Right cardiac atrium (tissue), 5 donors: ENCODE measurements at regions of chr6 and their contacts with region 1.

Region 1: GRCh38 chr6:30922447-30922852 is 8.4 kb downstream of the VARS2 start:
- DNase-seq: no peak
- ATAC-seq: no peak
- H3K4me3 ChIP-seq: no peak overlapping the region
- H3K27ac ChIP-seq: no peak overlapping the region
- H3K4me1 ChIP-seq: no peaks in the 10 kb centered on the region
- H3K27me3 ChIP-seq: no peaks in the 10 kb centered on the region

Region 2: GRCh38 chr6:30981942-30982772 is 59.7 kb after region 1 on chr6:
- intact Hi-C with region 1: no loop called
- DNase-seq: peak in 2 of 3 donors; percentile 27 to 52
- ATAC-seq: peak; percentile 83
- H3K4me3 ChIP-seq: no peak overlapping the region
- H3K27ac ChIP-seq: no peak overlapping the region
- H3K4me1 ChIP-seq: no peaks in the 10 kb centered on the region
- H3K27me3 ChIP-seq: no peaks in the 10 kb centered on the region

Region 3: GRCh38 chr6:31060145-31060544 is 137.7 kb after region 1 on chr6:
- intact Hi-C with region 1: loop called in 1 of 4 experiments (anchors 5 kb)
- DNase-seq: no peak
- ATAC-seq: no peak
- H3K4me3 ChIP-seq: no peak overlapping the region
- H3K27ac ChIP-seq: no peak overlapping the region
- H3K4me1 ChIP-seq: no peaks in the 10 kb centered on the region
- H3K27me3 ChIP-seq: no peaks in the 10 kb centered on the region

Region 4: GRCh38 chr6:31143148-31143547 is 220.7 kb after region 1 on chr6:
- intact Hi-C with region 1: no loop called
- DNase-seq: peak; percentile 83 to 89 (median 86)
- ATAC-seq: peak; percentile 78 to 93
- H3K4me3 ChIP-seq: no peak overlapping the region
- H3K27ac ChIP-seq: peak overlapping the region; percentile 65
- H3K4me1 ChIP-seq: peaks cover 8% of the 10 kb centered on the region
- H3K27me3 ChIP-seq: no peaks in the 10 kb centered on the region